ENCODE measurements at regions of chr15 and their contacts with region 1.

Region 1: GRCh38 chr15:84929744-84930371 is 45.4 kb downstream of the SLC28A1 start:
- DNase-seq: peak; percentile 99
- H3K4me3 Mint-ChIP-seq: peak overlapping the region; percentile 10
- H3K27ac Mint-ChIP-seq: peak overlapping the region; percentile 84
- H3K4me1 Mint-ChIP-seq: peaks cover 51% of the 10 kb centered on the region
- H3K27me3 Mint-ChIP-seq: no peaks in the 10 kb centered on the region
- CTCF ChIP-seq: no peak

Region 2: DNA sequence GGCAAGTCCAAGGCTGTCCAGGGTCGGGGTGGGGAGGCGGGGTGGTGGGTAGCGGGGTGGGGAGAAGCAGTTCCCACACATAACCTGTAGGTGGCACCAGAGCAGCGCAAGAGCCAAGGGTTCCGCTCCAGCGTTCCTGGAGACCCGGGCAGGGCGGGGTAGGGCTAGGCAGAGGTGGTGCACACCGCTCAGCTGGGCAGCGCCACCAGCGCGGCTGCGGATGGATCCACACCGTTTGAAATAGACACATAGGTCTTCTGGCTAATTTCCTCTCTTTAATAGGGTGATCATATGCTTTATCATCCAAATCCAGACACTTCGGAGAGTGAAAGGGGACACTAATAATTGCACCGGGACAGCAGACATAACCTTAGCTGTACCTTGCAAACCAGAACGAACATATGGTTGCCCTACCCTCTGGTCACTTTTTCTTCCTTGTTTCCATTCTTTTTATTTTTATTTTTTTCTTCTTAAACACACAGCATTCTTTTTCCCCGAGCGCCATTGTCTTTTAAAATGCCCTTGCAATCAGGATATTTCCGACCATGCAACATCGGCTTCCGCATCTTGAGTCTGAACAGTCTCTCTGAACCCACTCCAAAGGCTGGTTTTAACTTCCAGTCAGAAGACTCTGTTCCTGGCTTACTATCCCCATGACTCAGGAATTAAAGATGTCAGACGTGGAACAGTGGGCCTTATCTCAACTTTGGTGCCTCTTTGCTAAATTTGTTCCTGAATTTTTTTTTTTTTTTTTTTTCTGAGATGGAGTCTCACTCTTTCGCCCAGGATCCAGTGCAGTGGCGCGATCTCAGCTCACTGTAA is 341.6 kb before region 1 on chr15:
- CTCF ChIA-PET with region 1: interaction called, 5 read pairs
- intact Hi-C with region 1: loop called (anchors 5 kb)
- DNase-seq: peak; percentile 95
- H3K4me3 Mint-ChIP-seq: peak overlapping the region; percentile 32
- H3K27ac Mint-ChIP-seq: no peak overlapping the region
- H3K4me1 Mint-ChIP-seq: peaks cover 9% of the 10 kb centered on the region
- H3K27me3 Mint-ChIP-seq: no peaks in the 10 kb centered on the region
- CTCF ChIP-seq: peak; percentile 96

Region 3: GRCh38 chr15:84658080-84658787 is 271.6 kb before region 1 on chr15 and contains the start of gene NMB:
- CTCF ChIA-PET with region 1: interaction called, 6 read pairs
- intact Hi-C with region 1: loop called (anchors 5 kb)
- DNase-seq: peak; percentile 95
- H3K4me3 Mint-ChIP-seq: peak within 1 kb of the TSS; percentile 74
- H3K27ac Mint-ChIP-seq: peak within 1 kb of the TSS; percentile 71
- H3K4me1 Mint-ChIP-seq: peaks cover 32% of the 10 kb centered on the region
- H3K27me3 Mint-ChIP-seq: no peaks in the 10 kb centered on the region
- CTCF ChIP-seq: peak; percentile 87
- total RNA-seq, gene NMB: 10.9 and 16.6 TPM in 2 replicates

Region 4: GRCh38 chr15:84826369-84826823 is 103.5 kb before region 1 on chr15:
- CTCF ChIA-PET with region 1: interaction called, 7 read pairs
- intact Hi-C with region 1: loop called (anchors 1 kb)
- DNase-seq: peak; percentile 73
- H3K4me3 Mint-ChIP-seq: no peak overlapping the region
- H3K27ac Mint-ChIP-seq: no peak overlapping the region
- H3K4me1 Mint-ChIP-seq: peaks cover 24% of the 10 kb centered on the region
- H3K27me3 Mint-ChIP-seq: no peaks in the 10 kb centered on the region
- CTCF ChIP-seq: peak; percentile 72

Region 5: DNA sequence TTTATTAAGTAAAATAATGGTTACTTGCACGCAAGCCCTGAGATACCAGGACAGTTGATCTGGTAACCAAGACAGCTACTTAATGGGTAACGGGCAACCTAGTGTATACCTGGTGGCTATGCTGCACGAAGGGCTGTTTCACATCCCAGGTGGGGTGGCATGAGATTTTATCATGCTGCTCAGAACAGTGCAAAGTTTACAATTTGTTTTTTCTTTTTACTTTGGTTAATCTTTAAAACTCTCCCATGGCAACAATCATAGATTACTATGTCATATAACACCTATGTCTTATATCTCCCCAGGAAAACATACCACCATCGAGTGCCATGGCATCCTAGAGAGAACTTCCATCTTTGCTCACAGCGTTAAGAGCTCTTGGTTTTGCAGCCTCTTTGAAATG is 77.6 kb before region 1 on chr15:
- CTCF ChIA-PET with region 1: interaction called, 3 read pairs
- intact Hi-C with region 1: loop called (anchors 2 kb)
- DNase-seq: peak; percentile 27
- H3K4me3 Mint-ChIP-seq: peak overlapping the region; percentile 25
- H3K27ac Mint-ChIP-seq: peak overlapping the region; percentile 83
- H3K4me1 Mint-ChIP-seq: peaks cover 51% of the 10 kb centered on the region
- H3K27me3 Mint-ChIP-seq: no peaks in the 10 kb centered on the region
- CTCF ChIP-seq: no peak

Region 6: GRCh38 chr15:84894442-84895361 is 35.2 kb before region 1 on chr15:
- CTCF ChIA-PET with region 1: no interaction called
- intact Hi-C with region 1: no loop called
- DNase-seq: no peak
- H3K4me3 Mint-ChIP-seq: no peak overlapping the region
- H3K27ac Mint-ChIP-seq: no peak overlapping the region
- H3K4me1 Mint-ChIP-seq: no peaks in the 10 kb centered on the region
- H3K27me3 Mint-ChIP-seq: peaks cover 13% of the 10 kb centered on the region
- CTCF ChIP-seq: no peak

Region 7: GRCh38 chr15:84911879-84912660 is 17.8 kb before region 1 on chr15:
- CTCF ChIA-PET with region 1: interaction called, 11 read pairs
- intact Hi-C with region 1: no loop called
- DNase-seq: peak; percentile 85
- H3K4me3 Mint-ChIP-seq: peak overlapping the region; percentile 54
- H3K27ac Mint-ChIP-seq: peak overlapping the region; percentile 99
- H3K4me1 Mint-ChIP-seq: peaks cover 57% of the 10 kb centered on the region
- H3K27me3 Mint-ChIP-seq: no peaks in the 10 kb centered on the region
- CTCF ChIP-seq: no peak

Region 8: DNA sequence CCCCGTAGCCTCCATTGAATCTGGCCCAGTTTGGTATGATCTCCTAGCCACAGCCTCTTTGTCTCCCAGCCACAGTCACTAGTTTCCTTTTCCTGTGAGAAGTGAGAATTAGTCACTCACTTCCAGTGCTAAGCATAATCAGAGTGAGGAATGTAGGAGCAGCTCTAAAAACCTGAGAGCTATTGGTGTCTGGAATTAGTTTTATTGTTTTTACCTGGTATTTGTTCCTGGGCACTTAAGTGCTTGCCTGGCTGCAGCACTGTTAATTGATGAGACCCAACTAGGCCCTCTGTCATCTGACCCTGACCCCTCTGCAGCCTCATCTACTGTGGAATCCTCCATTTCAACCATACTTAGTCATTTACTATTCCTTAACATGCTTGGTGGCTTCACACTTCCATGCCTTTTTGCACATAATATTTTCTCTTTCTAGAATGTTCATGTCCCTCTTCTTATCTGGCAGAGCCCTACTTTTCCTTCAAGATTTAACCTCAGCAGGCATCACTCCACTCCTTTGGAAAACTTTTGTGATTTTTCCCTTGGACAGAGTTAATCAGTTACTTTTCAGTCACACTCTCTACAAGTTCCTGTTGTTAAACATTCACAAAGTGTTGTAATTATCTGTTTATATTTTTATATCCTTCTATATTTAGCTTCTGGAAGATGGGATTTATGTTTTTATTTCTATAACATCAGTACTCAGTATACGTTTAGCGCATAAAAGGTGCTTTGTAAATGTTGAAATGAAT is 100.6 kb after region 1 on chr15:
- CTCF ChIA-PET with region 1: interaction called, 13 read pairs
- intact Hi-C with region 1: no loop called
- DNase-seq: no peak
- H3K4me3 Mint-ChIP-seq: peak overlapping the region; percentile 24
- H3K27ac Mint-ChIP-seq: peak overlapping the region; percentile 72
- H3K4me1 Mint-ChIP-seq: peaks cover 68% of the 10 kb centered on the region
- H3K27me3 Mint-ChIP-seq: no peaks in the 10 kb centered on the region
- CTCF ChIP-seq: no peak

Region 9: GRCh38 chr15:85091990-85092389 is 162.1 kb after region 1 on chr15:
- CTCF ChIA-PET with region 1: no interaction called
- intact Hi-C with region 1: no loop called
- DNase-seq: no peak
- H3K4me3 Mint-ChIP-seq: no peak overlapping the region
- H3K27ac Mint-ChIP-seq: no peak overlapping the region
- H3K4me1 Mint-ChIP-seq: no peaks in the 10 kb centered on the region
- H3K27me3 Mint-ChIP-seq: no peaks in the 10 kb centered on the region
- CTCF ChIP-seq: no peak

Region 10: DNA sequence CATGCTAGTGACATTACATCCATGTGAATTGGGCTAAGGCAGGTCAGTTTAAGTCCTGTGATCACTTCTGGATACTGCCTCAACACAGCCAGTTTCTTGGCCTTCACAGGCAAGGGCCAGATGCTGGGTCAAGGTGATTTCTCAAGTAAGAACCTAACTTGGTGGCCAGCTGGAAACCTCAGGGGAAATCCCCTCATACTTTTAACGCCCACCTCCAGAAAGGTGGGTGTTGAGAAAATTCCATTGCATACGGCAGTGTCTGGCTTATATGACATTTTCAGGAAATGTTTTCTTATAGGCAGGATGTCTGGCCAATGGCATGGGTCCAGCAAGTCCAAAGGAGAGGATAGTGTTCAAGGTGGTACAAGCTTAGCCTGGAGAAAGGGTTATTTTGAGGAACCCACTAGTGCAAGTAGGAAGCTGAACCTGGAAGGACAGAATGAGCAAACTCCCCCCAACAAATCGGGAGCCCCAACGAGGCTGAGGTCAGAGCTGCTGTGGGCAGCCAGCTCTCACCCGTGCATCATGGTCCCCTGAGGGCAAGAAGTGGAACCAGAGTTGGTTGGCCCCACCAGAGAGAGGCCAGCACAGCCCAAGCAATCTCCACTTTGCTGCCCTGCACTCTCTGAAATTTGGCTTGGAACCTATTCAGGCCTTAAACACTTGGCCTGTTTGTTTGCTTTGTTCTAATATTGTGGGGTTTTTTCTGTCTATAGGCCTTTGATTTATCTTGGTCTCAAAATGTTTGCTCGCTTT is 187.2 kb after region 1 on chr15:
- CTCF ChIA-PET with region 1: no interaction called
- intact Hi-C with region 1: no loop called
- DNase-seq: no peak
- H3K4me3 Mint-ChIP-seq: no peak overlapping the region
- H3K27ac Mint-ChIP-seq: no peak overlapping the region
- H3K4me1 Mint-ChIP-seq: peaks cover 8% of the 10 kb centered on the region
- H3K27me3 Mint-ChIP-seq: no peaks in the 10 kb centered on the region
- CTCF ChIP-seq: no peak

Region 11: GRCh38 chr15:85394552-85395333 is 464.9 kb after region 1 on chr15:
- CTCF ChIA-PET with region 1: no interaction called
- intact Hi-C with region 1: no loop called
- DNase-seq: no peak
- H3K4me3 Mint-ChIP-seq: no peak overlapping the region
- H3K27ac Mint-ChIP-seq: no peak overlapping the region
- H3K4me1 Mint-ChIP-seq: peaks cover 30% of the 10 kb centered on the region
- H3K27me3 Mint-ChIP-seq: no peaks in the 10 kb centered on the region
- CTCF ChIP-seq: no peak